HEK293T (cell line): ENCODE measurements at regions of chr7 and their contacts with region 1.

Region 1: DNA sequence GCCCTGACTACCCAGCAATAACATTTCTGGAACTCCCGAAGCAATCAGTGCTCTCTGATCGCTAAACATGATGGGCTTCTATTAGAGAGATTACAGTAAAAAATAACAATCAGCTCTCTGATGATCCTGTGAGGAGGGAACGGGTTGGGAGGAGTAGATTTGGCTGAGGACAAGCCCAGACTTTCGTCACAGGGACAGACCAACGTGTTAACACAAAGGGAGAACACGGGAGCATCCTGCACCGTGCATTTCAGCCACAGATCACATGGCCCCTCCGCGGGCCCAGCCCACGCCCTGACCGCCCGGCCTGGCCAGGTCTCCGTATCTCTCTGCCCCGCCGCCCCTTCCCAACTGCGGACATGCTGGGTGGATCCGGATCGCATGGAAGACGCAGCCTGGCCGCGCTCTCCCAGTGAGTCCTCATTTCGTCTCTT is 95.0 kb upstream of the AGBL3 start:
- DNase-seq: peak; percentile 89

Region 2: DNA sequence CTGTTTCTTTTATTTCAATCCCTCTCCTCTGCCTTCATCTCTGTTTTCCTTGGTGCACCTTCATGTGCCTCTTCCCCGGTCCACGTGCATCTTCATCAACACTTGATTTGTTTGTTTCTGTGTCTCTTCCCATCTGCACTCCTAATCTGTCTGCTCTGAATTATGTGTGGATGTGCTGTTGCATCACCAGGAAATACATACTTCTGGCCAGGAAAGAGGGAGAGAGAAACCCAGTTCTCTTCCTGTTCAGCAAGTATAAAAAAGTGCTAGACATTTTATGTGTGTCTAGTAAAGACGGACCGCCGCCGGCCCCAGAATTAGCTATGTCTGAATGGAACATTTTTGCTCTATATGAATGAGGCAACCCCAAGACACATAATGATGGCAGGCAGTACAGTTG is 18.0 kb before region 1 on chr7:
- CTCF ChIA-PET with region 1: interaction called, 11 read pairs
- POLR2A ChIA-PET with region 1: interaction called, 3 read pairs
- DNase-seq: no peak

Region 3: GRCh38 chr7:134905375-134905774 is 14.1 kb after region 1 on chr7:
- CTCF ChIA-PET with region 1: no interaction called
- POLR2A ChIA-PET with region 1: no interaction called
- DNase-seq: no peak